ENCODE measurements at regions of chr3 and their contacts with region 1.

Region 1: DNA sequence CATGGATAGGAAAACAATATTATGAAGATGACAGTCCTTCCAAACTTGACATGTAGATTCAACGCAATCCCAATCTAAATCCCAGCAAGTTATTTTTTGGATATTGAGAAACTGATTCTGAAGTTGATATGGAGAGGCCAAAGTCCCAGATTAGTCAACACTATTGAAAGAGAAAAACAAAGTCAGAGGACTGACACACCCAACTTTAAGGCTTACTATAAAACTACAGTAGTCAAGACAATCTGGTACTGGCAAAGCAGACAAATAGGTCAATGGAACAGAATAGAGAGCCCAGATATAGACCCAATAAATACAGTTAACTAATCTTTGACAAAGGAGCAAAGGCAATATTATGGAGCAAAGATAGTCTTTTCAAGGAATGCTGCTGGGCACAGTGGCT is 119.2 kb upstream of the ASB14 start:
- DNase-seq: peak; percentile 23
- ATAC-seq: no peak
- H3K4me3 ChIP-seq: no peak overlapping the region
- H3K27ac ChIP-seq: no peak overlapping the region
- H3K4me1 ChIP-seq: no peaks in the 10 kb centered on the region
- H3K27me3 ChIP-seq: peaks cover 0 to 6% of the 10 kb centered on the region in 2 experiments; a peak in 3 of 5 replicates
- CTCF ChIP-seq: no peak
- EP300 ChIP-seq: no peak
- POLR2A ChIP-seq: no peak
- RAD21 ChIP-seq: no peak

Region 2: DNA sequence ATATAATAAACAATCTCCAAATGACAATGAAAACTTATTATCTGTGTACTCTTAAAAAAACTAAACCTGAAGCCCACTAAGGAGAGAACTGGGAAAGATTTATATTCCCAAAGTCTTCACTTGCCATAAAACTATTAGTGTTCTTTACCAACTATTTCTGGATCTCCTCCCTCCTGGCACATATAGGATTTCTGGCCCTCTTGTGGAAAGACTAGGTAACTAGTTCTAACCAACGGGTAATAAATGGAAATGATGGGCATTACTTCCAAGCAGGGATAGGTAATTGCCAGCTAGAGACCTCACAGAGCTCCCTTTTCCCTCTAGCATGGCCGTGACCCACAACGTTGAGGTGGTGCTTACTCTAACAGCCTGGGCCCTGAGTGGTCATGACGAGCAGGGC is 22.3 kb after region 1 on chr3:
- CTCF ChIA-PET with region 1: no interaction called
- POLR2A ChIA-PET with region 1: no interaction called
- in situ Hi-C with region 1: no loop called
- intact Hi-C with region 1: no loop called
- DNase-seq: peak; percentile 69
- ATAC-seq: peak; percentile 66
- H3K4me3 ChIP-seq: no peak overlapping the region
- H3K27ac ChIP-seq: no peak overlapping the region
- H3K4me1 ChIP-seq: peaks cover 34% of the 10 kb centered on the region
- H3K27me3 ChIP-seq: no peaks in the 10 kb centered on the region
- CTCF ChIP-seq: peak; percentile 39
- EP300 ChIP-seq: no peak
- POLR2A ChIP-seq: no peak
- RAD21 ChIP-seq: peak; percentile 30; the same call in 1 of the 2 replicates

Region 3: GRCh38 chr3:57500506-57500905 is 88.8 kb after region 1 on chr3:
- CTCF ChIA-PET with region 1: no interaction called
- POLR2A ChIA-PET with region 1: no interaction called
- in situ Hi-C with region 1: no loop called
- intact Hi-C with region 1: loop called (anchors 10 kb)
- DNase-seq: peak; percentile 64
- ATAC-seq: peak; percentile 56
- H3K4me3 ChIP-seq: no peak overlapping the region
- H3K27ac ChIP-seq: no peak overlapping the region
- H3K4me1 ChIP-seq: peaks cover 13% of the 10 kb centered on the region
- H3K27me3 ChIP-seq: no peaks in the 10 kb centered on the region
- CTCF ChIP-seq: no peak
- EP300 ChIP-seq: peak in 1 of 2 experiments; percentile 53; a peak in 1 of 4 replicates
- POLR2A ChIP-seq: no peak
- RAD21 ChIP-seq: no peak

Measured in HepG2 (cell line).